ENCODE measurements at regions of chr19 and their contacts with region 1.

Region 1: GRCh38 chr19:1373534-1374249 is 10.0 kb upstream of the NDUFS7 start:
- DNase-seq: peak in 1 of 9 experiments; percentile 15
- ATAC-seq: no peak
- H3K4me3 ChIP-seq: no peak overlapping the region
- H3K4me3 Mint-ChIP-seq: no peak overlapping the region
- H3K27ac ChIP-seq: no peak overlapping the region
- H3K27ac Mint-ChIP-seq: no peak overlapping the region
- H3K4me1 ChIP-seq: no peaks in the 10 kb centered on the region
- H3K4me1 Mint-ChIP-seq: no peaks in the 10 kb centered on the region
- H3K27me3 ChIP-seq: no peaks in the 10 kb centered on the region
- H3K27me3 Mint-ChIP-seq: no peaks in the 10 kb centered on the region
- CTCF ChIP-seq: no peak

Region 2: DNA sequence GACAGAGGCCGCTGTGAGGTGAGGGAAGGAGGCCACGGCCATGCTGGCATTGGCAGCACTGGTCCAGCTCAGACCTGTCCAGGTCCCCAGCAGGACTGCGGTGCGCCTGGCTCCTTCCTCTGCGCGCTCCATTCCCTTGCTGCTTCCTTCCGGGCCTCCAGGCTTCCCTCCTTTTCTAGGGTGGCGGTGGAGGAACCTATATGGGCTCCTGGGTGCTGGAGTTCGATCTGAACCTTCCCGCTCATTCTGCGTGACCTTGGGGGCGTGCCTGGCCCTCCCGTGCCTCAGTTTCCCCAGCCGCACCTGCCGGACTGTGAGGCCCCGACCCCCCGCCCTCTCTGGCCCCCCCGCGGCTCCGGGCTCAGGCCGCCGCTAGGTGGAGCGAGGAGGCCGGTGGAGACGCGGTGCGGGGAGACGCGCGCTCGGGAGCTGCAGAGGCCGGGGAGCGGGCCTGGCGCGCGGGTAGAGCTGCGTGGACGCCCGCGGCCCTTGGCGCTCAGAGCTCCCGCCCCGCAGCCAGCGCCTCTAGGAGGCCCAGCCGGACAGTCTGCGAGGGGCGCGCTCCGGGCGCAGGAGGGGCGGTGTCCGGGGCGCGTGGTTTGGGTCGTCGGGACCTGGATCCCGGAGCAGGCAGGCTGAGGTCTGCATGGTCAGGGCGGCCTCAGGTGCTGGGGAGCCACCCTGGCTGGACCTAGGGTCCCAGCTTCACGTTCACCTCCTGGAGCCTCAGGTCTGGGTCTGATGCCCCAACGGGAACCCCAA is 58.0 kb before region 1 on chr19:
- CTCF ChIA-PET with region 1: interaction called, 21 read pairs
- POLR2A ChIA-PET with region 1: no interaction called
- intact Hi-C with region 1: no loop called
- DNase-seq: peak in 7 of 9 experiments; percentile 12 to 58 (median 37)
- ATAC-seq: no peak
- H3K4me3 ChIP-seq: no peak overlapping the region
- H3K4me3 Mint-ChIP-seq: no peak overlapping the region
- H3K27ac ChIP-seq: no peak overlapping the region
- H3K27ac Mint-ChIP-seq: no peak overlapping the region
- H3K4me1 ChIP-seq: no peaks in the 10 kb centered on the region
- H3K4me1 Mint-ChIP-seq: peaks cover 1% of the 10 kb centered on the region
- H3K27me3 ChIP-seq: peaks cover 2 to 9% of the 10 kb centered on the region in 2 experiments
- H3K27me3 Mint-ChIP-seq: peaks cover 22% of the 10 kb centered on the region
- CTCF ChIP-seq: no peak

Region 3: DNA sequence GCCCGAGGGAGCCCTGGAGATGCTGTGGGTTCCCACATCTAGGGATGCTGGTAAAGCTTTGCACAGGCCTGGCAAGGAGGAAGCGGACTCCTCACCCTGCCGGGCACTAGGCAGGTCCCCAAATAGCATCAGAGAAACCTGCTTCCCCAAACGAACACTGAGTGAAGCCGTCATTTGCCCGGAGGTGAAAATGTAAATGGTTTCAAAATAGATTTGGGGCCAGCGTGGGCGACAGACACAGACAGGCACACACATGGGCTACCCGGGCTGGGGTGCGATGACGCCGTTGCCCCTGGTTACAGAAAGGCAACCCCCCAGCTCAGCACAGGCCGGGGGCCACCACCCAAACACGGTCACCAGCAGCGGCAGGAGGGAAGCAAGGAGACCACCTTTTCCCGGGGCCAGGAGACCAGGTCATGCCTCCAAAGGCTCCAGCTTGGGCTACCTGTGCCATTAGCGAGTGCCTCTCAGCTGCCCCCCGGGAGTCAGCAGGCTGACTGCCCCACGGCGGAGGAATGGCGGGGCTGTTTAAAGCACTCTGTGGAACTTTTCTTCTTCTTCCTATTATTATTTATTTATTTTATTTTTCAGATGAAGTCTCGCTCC is 37.5 kb before region 1 on chr19:
- CTCF ChIA-PET with region 1: no interaction called
- POLR2A ChIA-PET with region 1: no interaction called
- intact Hi-C with region 1: no loop called
- DNase-seq: no peak
- ATAC-seq: no peak
- H3K4me3 ChIP-seq: no peak overlapping the region
- H3K4me3 Mint-ChIP-seq: no peak overlapping the region
- H3K27ac ChIP-seq: no peak overlapping the region
- H3K27ac Mint-ChIP-seq: no peak overlapping the region
- H3K4me1 ChIP-seq: no peaks in the 10 kb centered on the region
- H3K4me1 Mint-ChIP-seq: no peaks in the 10 kb centered on the region
- H3K27me3 ChIP-seq: no peaks in the 10 kb centered on the region
- H3K27me3 Mint-ChIP-seq: peaks cover 5% of the 10 kb centered on the region
- CTCF ChIP-seq: no peak

Region 4: GRCh38 chr19:1503089-1503933 is 129.6 kb after region 1 on chr19:
- CTCF ChIA-PET with region 1: no interaction called
- POLR2A ChIA-PET with region 1: no interaction called
- intact Hi-C with region 1: no loop called
- DNase-seq: peak in 8 of 9 experiments; percentile 41 to 77 (median 64)
- ATAC-seq: no peak
- H3K4me3 ChIP-seq: no peak overlapping the region
- H3K4me3 Mint-ChIP-seq: no peak overlapping the region
- H3K27ac ChIP-seq: no peak overlapping the region
- H3K27ac Mint-ChIP-seq: no peak overlapping the region
- H3K4me1 ChIP-seq: peaks cover 24% of the 10 kb centered on the region
- H3K4me1 Mint-ChIP-seq: peaks cover 11% of the 10 kb centered on the region
- H3K27me3 ChIP-seq: peaks cover 8% of the 10 kb centered on the region in 2 experiments
- H3K27me3 Mint-ChIP-seq: peaks cover 16% of the 10 kb centered on the region
- CTCF ChIP-seq: peak; percentile 74

Region 5: GRCh38 chr19:1521636-1522035 is 147.9 kb after region 1 on chr19:
- CTCF ChIA-PET with region 1: no interaction called
- POLR2A ChIA-PET with region 1: no interaction called
- intact Hi-C with region 1: no loop called
- DNase-seq: no peak
- ATAC-seq: no peak
- H3K4me3 ChIP-seq: no peak overlapping the region
- H3K4me3 Mint-ChIP-seq: no peak overlapping the region
- H3K27ac ChIP-seq: no peak overlapping the region
- H3K27ac Mint-ChIP-seq: no peak overlapping the region
- H3K4me1 ChIP-seq: no peaks in the 10 kb centered on the region
- H3K4me1 Mint-ChIP-seq: peaks cover 7% of the 10 kb centered on the region
- H3K27me3 ChIP-seq: peaks cover 12 to 14% of the 10 kb centered on the region in 2 experiments
- H3K27me3 Mint-ChIP-seq: peaks cover 29% of the 10 kb centered on the region
- CTCF ChIP-seq: no peak

Measured in CD8-positive, alpha-beta T cell (primary cell).